HAP-1 (cell line): ENCODE measurements at regions of chr2 and their contacts with region 1.

Region 1: DNA sequence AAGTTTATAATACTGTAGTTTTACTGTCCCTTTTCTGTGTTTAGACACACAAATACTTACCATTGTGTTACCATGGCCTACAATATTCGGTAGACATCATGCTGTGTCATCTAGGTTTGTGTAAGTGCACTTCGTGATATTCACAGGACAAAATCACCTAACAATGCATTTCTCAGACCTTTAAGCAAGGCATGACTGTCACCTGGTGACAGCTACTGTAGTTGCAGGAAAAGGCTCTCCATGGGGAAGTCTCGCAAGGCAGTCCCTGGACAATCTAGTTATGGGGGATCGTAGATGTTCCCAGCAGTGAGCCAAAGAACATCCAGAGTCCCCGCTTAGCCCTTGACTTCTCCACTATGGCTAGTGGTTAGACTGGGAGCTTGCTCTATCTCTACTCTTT is 73.1 kb downstream of the EIF2AK3 start:
- DNase-seq: no peak
- H3K4me3 ChIP-seq: no peak overlapping the region
- H3K4me1 ChIP-seq: no peaks in the 10 kb centered on the region
- H3K27me3 ChIP-seq: no peaks in the 10 kb centered on the region

Region 2: GRCh38 chr2:88199912-88200682 is 354.1 kb before region 1 on chr2:
- in situ Hi-C with region 1: loop called (anchors 10 kb)
- DNase-seq: peak in 1 of 2 experiments; percentile 55
- H3K4me3 ChIP-seq: no peak overlapping the region
- H3K4me1 ChIP-seq: no peaks in the 10 kb centered on the region
- H3K27me3 ChIP-seq: peaks cover 14% of the 10 kb centered on the region

Region 3: DNA sequence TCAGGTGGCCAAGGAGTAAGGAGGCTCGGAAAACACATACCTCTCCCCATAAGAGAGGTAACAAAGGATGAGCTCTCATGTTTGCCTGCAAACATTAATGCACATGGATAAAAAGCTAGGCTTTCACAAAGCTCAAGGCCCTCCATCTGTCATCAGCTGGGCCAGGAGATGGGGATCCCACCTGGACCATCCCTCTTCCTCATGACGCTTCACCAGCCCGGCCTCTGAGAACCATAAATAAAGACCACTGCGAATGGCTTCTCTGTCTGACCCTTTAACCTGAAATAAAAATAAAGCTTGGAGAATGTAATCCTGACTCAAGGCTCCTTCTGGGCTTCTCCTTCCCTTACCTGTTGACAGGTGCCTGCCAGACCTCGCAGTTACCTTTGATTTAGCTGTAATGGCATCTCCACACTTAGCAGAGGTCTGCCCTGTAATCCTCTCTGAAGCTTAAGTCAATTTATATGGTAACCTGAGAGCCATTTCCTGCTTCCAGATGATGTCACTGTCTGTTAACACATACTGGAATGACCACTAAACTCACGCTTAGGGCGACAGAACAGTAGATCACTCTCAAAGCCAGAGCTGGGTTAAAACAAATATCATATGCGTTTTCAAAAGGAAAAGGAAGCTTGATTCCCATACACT is 72.4 kb before region 1 on chr2:
- in situ Hi-C with region 1: no loop called
- DNase-seq: no peak
- H3K4me3 ChIP-seq: no peak overlapping the region
- H3K4me1 ChIP-seq: no peaks in the 10 kb centered on the region
- H3K27me3 ChIP-seq: peaks cover 3% of the 10 kb centered on the region; the same call in 1 of the 2 replicates

Region 4: DNA sequence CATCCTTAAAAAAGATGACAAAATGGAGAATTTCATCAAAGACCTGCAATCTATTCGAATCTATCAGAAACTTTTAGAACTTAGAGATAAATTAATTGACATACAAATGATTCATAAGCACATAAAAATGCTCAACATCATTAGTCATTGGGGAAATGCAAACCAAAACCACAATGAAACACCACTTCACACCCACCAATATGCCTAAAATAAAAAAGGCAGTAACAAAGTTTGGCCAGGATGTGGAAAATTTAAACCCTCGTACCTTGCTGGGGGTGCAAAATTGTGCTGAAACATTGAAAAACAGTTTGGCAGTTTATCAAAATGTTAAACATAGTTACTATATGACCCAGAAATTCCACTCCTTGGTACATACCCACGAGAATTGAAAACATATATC is 84.6 kb after region 1 on chr2:
- in situ Hi-C with region 1: no loop called
- DNase-seq: no peak
- H3K4me3 ChIP-seq: no peak overlapping the region
- H3K4me1 ChIP-seq: no peaks in the 10 kb centered on the region
- H3K27me3 ChIP-seq: peaks cover 5% of the 10 kb centered on the region